HepG2 (cell line): ENCODE measurements at regions of chr15 and their contacts with region 1.

Region 1: GRCh38 chr15:68875377-68876116 is 54.8 kb upstream of the SPESP1 start:
- DNase-seq: peak; percentile 79
- ATAC-seq: peak; percentile 98
- H3K4me3 ChIP-seq: peak overlapping the region; percentile 37 to 66 (median 49); a peak in 5 of 6 replicates
- H3K27ac ChIP-seq: no peak overlapping the region
- H3K4me1 ChIP-seq: peaks cover 12% of the 10 kb centered on the region
- H3K27me3 ChIP-seq: peaks cover 1 to 10% of the 10 kb centered on the region in 2 experiments
- CTCF ChIP-seq: peak; percentile 94
- EP300 ChIP-seq: no peak
- POLR2A ChIP-seq: no peak
- RAD21 ChIP-seq: peak; percentile 85

Region 2: DNA sequence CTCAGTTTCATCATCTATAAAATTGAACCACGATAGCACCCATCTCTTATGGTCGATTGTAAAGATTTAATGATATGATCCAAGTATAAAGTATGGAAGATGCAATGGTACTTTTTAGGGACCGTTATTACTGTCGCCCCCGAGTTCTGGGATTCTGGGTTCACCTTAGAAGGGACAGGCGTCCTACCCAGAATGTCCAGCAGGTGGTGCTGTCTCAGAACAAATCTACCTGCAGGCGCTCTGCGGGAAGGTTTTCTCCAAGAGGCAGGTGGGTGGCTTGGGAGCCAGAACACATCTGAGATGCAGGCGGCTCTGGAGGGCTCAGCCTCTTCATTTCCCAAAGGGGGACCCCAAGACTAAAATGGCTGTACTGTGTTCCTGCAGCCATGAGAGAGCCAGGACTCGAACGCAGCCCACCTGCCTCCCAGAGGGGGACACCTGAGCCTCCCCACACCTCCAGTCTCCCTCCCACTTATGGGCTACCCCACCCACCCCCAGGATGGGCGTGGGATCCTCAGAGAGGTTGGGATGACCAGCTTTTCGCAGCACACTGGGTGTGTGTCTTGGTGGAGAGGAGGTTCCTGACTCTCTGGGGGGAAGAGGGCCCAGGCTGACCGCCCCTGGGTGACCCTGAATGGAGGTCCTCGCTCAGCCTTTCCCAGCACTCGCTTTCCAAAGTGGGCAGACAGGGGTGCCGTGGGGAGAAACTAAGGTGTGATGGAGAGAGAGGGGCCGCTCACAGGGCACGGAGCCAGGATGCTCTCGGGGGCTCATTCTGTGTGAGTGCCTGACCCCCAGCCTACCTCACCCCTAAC is 324.9 kb before region 1 on chr15:
- CTCF ChIA-PET with region 1: interaction called, 10 read pairs
- POLR2A ChIA-PET with region 1: no interaction called
- in situ Hi-C with region 1: loop called (anchors 5 kb)
- intact Hi-C with region 1: loop called (anchors 2 kb)
- DNase-seq: peak; percentile 41
- ATAC-seq: peak; percentile 72
- H3K4me3 ChIP-seq: no peak overlapping the region
- H3K27ac ChIP-seq: no peak overlapping the region
- H3K4me1 ChIP-seq: no peaks in the 10 kb centered on the region
- H3K27me3 ChIP-seq: no peaks in the 10 kb centered on the region
- CTCF ChIP-seq: peak; percentile 85
- EP300 ChIP-seq: no peak
- POLR2A ChIP-seq: no peak
- RAD21 ChIP-seq: peak; percentile 32; the same call in 1 of the 2 replicates

Region 3: DNA sequence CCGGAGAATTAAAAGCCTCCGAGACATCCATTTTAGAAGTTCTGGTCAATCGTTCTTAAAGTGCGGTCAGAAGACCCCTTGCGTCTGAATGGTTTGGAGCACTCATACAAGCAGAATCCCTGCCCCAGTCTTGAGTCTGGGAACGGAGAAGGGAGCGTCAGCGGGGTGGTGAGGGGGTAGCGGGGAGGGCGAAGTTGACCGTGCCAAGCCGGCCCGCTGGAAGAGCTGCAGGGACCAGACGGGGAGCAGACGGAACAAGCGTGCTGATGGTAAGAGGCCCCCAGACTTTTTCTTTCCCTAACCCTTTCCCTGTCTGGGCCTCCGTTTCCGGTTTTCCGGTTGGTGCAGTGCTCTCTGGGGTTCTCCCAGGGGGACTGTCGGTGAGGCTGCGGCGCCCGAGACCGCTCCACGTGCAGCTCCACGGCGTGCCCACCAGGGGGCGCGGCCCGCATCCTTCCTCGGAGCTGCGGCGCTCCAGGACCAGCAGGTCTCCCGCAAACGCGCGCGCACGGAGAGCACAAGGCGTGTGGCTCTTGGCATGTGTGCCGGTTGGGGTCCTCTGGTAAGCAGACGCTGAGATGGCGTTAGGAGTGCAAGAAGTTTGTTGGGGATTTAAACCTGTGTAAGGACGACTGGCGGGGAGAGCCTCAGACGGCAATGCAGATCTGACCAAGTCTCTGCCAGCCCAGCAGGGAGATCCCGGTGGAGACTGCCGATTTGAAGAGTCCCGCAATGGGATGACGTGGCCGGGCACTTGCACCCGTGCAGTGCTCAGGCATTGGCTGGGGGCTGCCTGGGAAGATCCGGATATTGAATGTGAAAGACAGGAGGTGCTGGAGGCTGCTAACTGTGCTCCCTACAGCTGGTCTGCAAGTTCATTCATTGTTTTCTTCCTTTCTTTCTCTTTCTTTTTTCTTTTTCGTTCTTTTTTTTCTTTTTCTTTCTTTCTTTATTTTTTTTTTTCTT is 315.9 kb before region 1 on chr15:
- CTCF ChIA-PET with region 1: interaction called, 7 read pairs
- POLR2A ChIA-PET with region 1: no interaction called
- in situ Hi-C with region 1: loop called (anchors 5 kb)
- intact Hi-C with region 1: loop called (anchors 2 kb)
- DNase-seq: peak; percentile 33
- ATAC-seq: peak; percentile 93
- H3K4me3 ChIP-seq: no peak overlapping the region
- H3K27ac ChIP-seq: no peak overlapping the region
- H3K4me1 ChIP-seq: peaks cover 4% of the 10 kb centered on the region; the same call in 1 of the 2 replicates
- H3K27me3 ChIP-seq: peaks cover 3 to 12% of the 10 kb centered on the region in 2 experiments; a peak in 2 of 5 replicates
- CTCF ChIP-seq: peak; percentile 96
- EP300 ChIP-seq: no peak
- POLR2A ChIP-seq: no peak
- RAD21 ChIP-seq: peak; percentile 74

Region 4: GRCh38 chr15:68637767-68638404 is 237.7 kb before region 1 on chr15:
- CTCF ChIA-PET with region 1: no interaction called
- POLR2A ChIA-PET with region 1: no interaction called
- in situ Hi-C with region 1: no loop called
- intact Hi-C with region 1: no loop called
- DNase-seq: no peak
- ATAC-seq: no peak
- H3K4me3 ChIP-seq: no peak overlapping the region
- H3K27ac ChIP-seq: no peak overlapping the region
- H3K4me1 ChIP-seq: peaks cover 6% of the 10 kb centered on the region
- H3K27me3 ChIP-seq: peaks cover 0 to 4% of the 10 kb centered on the region in 2 experiments; a peak in 2 of 5 replicates
- CTCF ChIP-seq: no peak
- EP300 ChIP-seq: no peak
- POLR2A ChIP-seq: no peak
- RAD21 ChIP-seq: no peak

Region 5: GRCh38 chr15:68730471-68730919 is 145.1 kb before region 1 on chr15:
- CTCF ChIA-PET with region 1: interaction called, 29 read pairs
- POLR2A ChIA-PET with region 1: no interaction called
- in situ Hi-C with region 1: loop called (anchors 5 kb)
- intact Hi-C with region 1: no loop called
- DNase-seq: peak; percentile 21
- ATAC-seq: peak; percentile 71
- H3K4me3 ChIP-seq: no peak overlapping the region
- H3K27ac ChIP-seq: no peak overlapping the region
- H3K4me1 ChIP-seq: no peaks in the 10 kb centered on the region
- H3K27me3 ChIP-seq: peaks cover 2 to 34% of the 10 kb centered on the region in 2 experiments; a peak in 4 of 5 replicates
- CTCF ChIP-seq: peak; percentile 64
- EP300 ChIP-seq: no peak
- POLR2A ChIP-seq: no peak
- RAD21 ChIP-seq: peak; percentile 42; the same call in 1 of the 2 replicates

Region 6: GRCh38 chr15:68783226-68784058 is 92.1 kb before region 1 on chr15:
- CTCF ChIA-PET with region 1: interaction called, 36 read pairs
- POLR2A ChIA-PET with region 1: interaction called, 3 read pairs
- in situ Hi-C with region 1: loop called (anchors 5 kb)
- intact Hi-C with region 1: loop called (anchors 1 kb)
- DNase-seq: peak; percentile 19
- ATAC-seq: peak; percentile 93
- H3K4me3 ChIP-seq: no peak overlapping the region
- H3K27ac ChIP-seq: no peak overlapping the region
- H3K4me1 ChIP-seq: no peaks in the 10 kb centered on the region
- H3K27me3 ChIP-seq: no peaks in the 10 kb centered on the region
- CTCF ChIP-seq: peak; percentile 73
- EP300 ChIP-seq: no peak
- POLR2A ChIP-seq: no peak
- RAD21 ChIP-seq: peak; percentile 62; the same call in 1 of the 2 replicates

Region 7: DNA sequence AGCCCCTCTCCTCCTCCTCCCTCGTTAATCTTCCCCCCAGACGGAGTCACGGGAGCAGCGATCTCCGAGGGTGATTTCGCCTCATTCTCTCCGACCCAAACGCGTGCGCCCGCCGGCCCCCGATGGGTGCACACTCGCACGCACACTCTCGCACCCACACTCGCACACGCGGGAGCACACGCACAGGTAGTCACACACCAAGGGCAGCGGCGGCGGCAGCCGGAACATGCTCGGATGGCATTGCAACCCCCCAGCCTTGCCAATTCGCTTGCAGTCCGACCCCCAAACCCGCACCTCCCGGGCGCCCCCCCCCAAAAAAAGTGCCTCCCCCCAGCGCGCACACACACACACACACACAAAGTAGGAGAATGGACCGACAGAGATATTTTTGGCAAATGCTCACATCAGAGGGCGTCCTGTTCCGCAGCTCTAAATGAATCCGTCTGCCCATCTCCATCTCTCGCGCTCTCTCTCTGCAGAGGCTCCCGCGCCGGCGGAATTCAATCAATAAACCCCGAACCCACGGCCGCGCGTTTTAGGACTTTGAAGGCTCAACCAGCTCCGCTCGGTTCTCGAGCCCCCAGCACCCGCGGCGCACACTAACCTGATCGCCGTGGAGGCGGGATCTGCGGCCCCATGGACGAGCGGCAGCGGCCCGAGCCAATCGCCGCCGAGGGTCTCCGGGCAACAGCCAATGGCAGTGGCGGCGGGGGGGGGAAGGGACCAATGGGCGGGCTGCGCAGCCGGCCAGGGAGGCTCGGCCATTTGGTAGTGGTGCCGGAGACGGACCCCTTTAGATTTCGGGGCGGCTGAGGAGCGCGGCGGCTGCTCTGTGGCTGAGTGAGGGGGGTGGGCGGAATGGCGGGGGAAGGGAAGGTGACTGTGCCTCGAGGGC is 55.0 kb before region 1 on chr15 and contains the start of gene ANP32A:
- CTCF ChIA-PET with region 1: no interaction called
- POLR2A ChIA-PET with region 1: interaction called, 3 read pairs
- in situ Hi-C with region 1: no loop called
- intact Hi-C with region 1: loop called (anchors 5 kb)
- DNase-seq: peak; percentile 85
- ATAC-seq: peak; percentile 80
- H3K4me3 ChIP-seq: peak within 1 kb of the TSS; percentile 83 to 100 (median 84)
- H3K27ac ChIP-seq: peak within 1 kb of the TSS; percentile 97
- H3K4me1 ChIP-seq: peaks cover 26% of the 10 kb centered on the region
- H3K27me3 ChIP-seq: no peaks in the 10 kb centered on the region; a peak in 1 of 5 replicates
- CTCF ChIP-seq: no peak
- EP300 ChIP-seq: no peak
- POLR2A ChIP-seq: peak; percentile 12 to 77; a peak in 3 of 4 replicates
- RAD21 ChIP-seq: no peak
- total RNA-seq, gene ANP32A: 206 and 323 TPM in 2 replicates

Region 8: GRCh38 chr15:68843425-68844311 is 31.9 kb before region 1 on chr15:
- CTCF ChIA-PET with region 1: no interaction called
- POLR2A ChIA-PET with region 1: no interaction called
- in situ Hi-C with region 1: no loop called
- intact Hi-C with region 1: loop called (anchors 1 kb)
- DNase-seq: no peak
- ATAC-seq: peak; percentile 56
- H3K4me3 ChIP-seq: peak overlapping the region in 1 of 3 experiments; percentile 49; a peak in 1 of 6 replicates
- H3K27ac ChIP-seq: no peak overlapping the region
- H3K4me1 ChIP-seq: no peaks in the 10 kb centered on the region
- H3K27me3 ChIP-seq: peaks cover 4 to 24% of the 10 kb centered on the region in 2 experiments; a peak in 4 of 5 replicates
- CTCF ChIP-seq: no peak
- EP300 ChIP-seq: no peak
- POLR2A ChIP-seq: no peak
- RAD21 ChIP-seq: no peak

Region 9: GRCh38 chr15:68948951-68949526 is 73.5 kb after region 1 on chr15:
- CTCF ChIA-PET with region 1: no interaction called
- POLR2A ChIA-PET with region 1: no interaction called
- in situ Hi-C with region 1: no loop called
- intact Hi-C with region 1: no loop called
- DNase-seq: no peak
- ATAC-seq: no peak
- H3K4me3 ChIP-seq: no peak overlapping the region
- H3K27ac ChIP-seq: no peak overlapping the region
- H3K4me1 ChIP-seq: no peaks in the 10 kb centered on the region
- H3K27me3 ChIP-seq: peaks cover 0 to 4% of the 10 kb centered on the region in 2 experiments; a peak in 1 of 5 replicates
- CTCF ChIP-seq: no peak
- EP300 ChIP-seq: no peak
- POLR2A ChIP-seq: no peak
- RAD21 ChIP-seq: no peak

Region 10: DNA sequence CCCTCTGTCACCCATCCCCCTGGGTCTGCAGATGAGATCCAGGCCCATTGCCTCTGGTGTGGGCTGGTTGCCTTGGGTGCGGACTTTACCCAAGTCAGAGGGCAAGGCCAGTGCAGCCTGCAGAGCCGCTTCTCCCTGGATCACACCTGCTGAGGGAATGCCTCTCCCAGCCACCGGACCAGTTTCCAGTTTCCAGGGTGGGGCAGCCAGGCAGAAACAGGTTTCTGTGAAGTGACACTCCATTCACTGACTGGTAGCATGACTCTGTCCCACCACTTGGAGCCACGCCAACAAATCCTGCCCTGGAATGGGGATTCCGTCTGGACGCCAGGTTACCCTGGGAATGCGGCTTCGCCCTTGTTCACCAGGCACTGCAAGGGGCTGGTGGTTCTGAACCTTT is 453.2 kb after region 1 on chr15:
- CTCF ChIA-PET with region 1: no interaction called
- POLR2A ChIA-PET with region 1: no interaction called
- in situ Hi-C with region 1: no loop called
- intact Hi-C with region 1: no loop called
- DNase-seq: no peak
- ATAC-seq: peak; percentile 53; the same call in 2 of the 3 replicates
- H3K4me3 ChIP-seq: no peak overlapping the region
- H3K27ac ChIP-seq: no peak overlapping the region
- H3K4me1 ChIP-seq: peaks cover 7% of the 10 kb centered on the region; the same call in 1 of the 2 replicates
- H3K27me3 ChIP-seq: peaks cover 3 to 13% of the 10 kb centered on the region in 2 experiments; a peak in 3 of 5 replicates
- CTCF ChIP-seq: no peak
- EP300 ChIP-seq: no peak
- POLR2A ChIP-seq: no peak
- RAD21 ChIP-seq: no peak